Activated CD4-positive, alpha-beta T cell treated with anti-CD3 and anti-CD28 coated beads, Interleukin-2, amount 10 ng/mL, durations not matched to agents 24 days and 14 days (primary cell): ENCODE measurements at regions of chrX and their contacts with region 1.

Region 1: DNA sequence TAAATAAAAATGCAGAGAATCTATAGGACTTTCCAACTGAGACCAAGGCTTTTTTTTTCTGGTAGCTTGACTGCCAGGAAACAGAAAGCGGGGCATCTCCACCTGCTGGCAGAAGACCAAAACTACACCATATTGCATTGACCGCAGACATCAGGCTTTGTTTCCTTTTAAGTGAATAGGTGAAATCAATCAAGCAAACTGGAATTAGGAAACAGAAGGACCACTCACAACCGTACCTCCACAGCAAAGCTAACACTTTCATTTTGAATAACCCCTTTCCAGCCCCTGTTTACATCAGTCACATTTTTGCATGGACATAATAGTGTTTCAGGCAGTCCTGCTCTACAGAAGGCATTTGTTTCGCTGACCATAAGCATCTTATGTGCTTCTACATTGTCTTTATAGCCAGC is 218.2 kb downstream of the IDS start:
- DNase-seq: peak; percentile 80
- H3K4me3 Mint-ChIP-seq: no peak overlapping the region
- H3K27ac Mint-ChIP-seq: no peak overlapping the region
- H3K4me1 Mint-ChIP-seq: peaks cover 12% of the 10 kb centered on the region
- H3K27me3 Mint-ChIP-seq: no peaks in the 10 kb centered on the region

Region 2: DNA sequence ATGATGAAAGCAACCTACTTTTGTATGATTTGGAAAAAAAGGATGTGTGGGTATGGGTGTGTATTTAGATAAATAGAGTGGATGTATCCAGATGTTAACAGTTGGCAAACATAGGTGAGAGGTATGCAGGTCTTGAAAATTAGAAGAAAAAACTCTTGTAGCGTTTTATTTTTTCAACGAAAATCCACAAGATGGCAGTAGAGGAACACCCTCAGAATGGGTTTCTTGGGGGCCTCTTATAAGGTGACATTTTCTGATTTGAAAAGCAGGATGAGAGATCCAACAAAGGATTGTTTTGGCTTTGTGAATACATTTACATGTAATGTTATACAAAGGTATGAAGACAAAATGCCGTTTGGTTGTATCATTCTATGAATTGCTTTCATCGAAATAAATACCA is 1237.5 kb before region 1 on chrX:
- intact Hi-C with region 1: loop called (anchors 2 kb)
- DNase-seq: peak; percentile 54
- H3K4me3 Mint-ChIP-seq: no peak overlapping the region
- H3K27ac Mint-ChIP-seq: no peak overlapping the region
- H3K4me1 Mint-ChIP-seq: no peaks in the 10 kb centered on the region
- H3K27me3 Mint-ChIP-seq: peaks cover 5% of the 10 kb centered on the region

Region 3: DNA sequence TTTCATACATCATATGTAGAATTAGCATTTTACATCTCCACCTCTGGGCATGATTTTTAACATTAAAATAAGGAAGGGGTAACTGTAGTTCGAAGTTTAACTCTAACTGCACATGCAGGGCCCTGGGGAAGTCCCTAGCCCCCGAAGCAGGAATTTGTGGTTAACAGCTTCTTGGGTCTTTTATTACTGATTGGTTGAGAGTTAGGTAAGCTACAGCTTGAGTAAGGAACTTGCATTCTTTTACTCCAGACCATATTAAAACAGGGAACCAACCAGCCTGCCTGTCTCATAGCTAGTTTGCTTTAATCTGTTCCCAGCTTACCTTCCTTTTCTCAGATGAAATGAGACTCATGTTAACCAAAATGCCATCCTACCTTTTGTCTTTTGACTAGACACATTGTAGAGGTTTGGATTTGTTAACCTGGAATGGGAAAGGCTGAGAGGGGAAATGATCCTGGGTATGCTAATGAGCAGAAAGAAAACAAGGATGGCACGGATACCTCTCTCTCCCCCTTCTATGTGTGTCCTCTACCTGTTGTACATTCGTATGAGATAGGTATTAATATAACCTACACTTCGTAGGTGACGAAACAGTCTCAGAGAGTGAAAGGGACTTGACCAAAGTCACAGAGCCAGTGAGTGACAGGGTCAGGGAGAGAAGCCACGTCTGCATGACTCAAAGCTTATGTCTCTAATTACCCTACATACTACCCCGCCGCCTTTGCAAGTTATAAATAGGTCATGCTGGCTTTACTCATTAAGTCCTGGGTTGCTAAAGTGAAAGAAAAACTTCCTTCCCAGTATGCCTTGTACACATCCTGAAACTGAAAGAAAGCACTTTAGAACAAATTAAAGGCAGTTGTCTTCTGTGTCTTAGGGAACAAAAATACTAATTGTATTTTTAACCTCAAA is 906.0 kb before region 1 on chrX:
- intact Hi-C with region 1: loop called (anchors 1 kb)
- DNase-seq: peak; percentile 82
- H3K4me3 Mint-ChIP-seq: peak overlapping the region; percentile 78
- H3K27ac Mint-ChIP-seq: peak overlapping the region; percentile 92
- H3K4me1 Mint-ChIP-seq: peaks cover 21% of the 10 kb centered on the region
- H3K27me3 Mint-ChIP-seq: no peaks in the 10 kb centered on the region

Region 4: GRCh38 chrX:149145845-149146285 is 141.1 kb before region 1 on chrX:
- intact Hi-C with region 1: loop called (anchors 5 kb)
- DNase-seq: no peak
- H3K4me3 Mint-ChIP-seq: no peak overlapping the region
- H3K27ac Mint-ChIP-seq: no peak overlapping the region
- H3K4me1 Mint-ChIP-seq: no peaks in the 10 kb centered on the region
- H3K27me3 Mint-ChIP-seq: no peaks in the 10 kb centered on the region

Region 5: GRCh38 chrX:149230689-149231088 is 56.3 kb before region 1 on chrX:
- intact Hi-C with region 1: loop called (anchors 1 kb)
- DNase-seq: no peak
- H3K4me3 Mint-ChIP-seq: no peak overlapping the region
- H3K27ac Mint-ChIP-seq: peak overlapping the region; percentile 84
- H3K4me1 Mint-ChIP-seq: peaks cover 3% of the 10 kb centered on the region
- H3K27me3 Mint-ChIP-seq: no peaks in the 10 kb centered on the region

Region 6: DNA sequence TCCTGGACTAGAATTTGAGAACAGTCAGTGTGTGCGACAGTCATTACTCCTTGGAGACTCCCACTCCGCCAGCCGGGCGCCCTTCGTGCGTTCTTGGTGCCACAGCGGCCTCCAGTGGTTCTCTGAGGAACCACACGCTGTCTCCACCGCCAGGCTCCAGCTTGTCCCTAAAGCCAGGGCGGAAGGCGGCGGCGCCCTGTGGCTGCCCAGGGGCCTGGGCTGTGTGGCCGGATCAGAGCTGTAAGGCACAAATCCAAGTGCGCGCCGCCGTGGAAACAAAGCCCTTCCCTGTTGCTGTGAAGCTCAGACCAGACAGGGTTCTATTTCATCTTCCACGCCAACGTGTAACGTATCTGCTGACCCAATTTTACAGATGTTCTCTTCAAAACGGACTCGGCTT is 184.0 kb after region 1 on chrX:
- intact Hi-C with region 1: loop called (anchors 5 kb)
- DNase-seq: peak; percentile 87
- H3K4me3 Mint-ChIP-seq: no peak overlapping the region
- H3K27ac Mint-ChIP-seq: no peak overlapping the region
- H3K4me1 Mint-ChIP-seq: peaks cover 2% of the 10 kb centered on the region
- H3K27me3 Mint-ChIP-seq: peaks cover 6% of the 10 kb centered on the region